PC-3 (cell line): ENCODE measurements at regions of chrX and their contacts with region 1.

Region 1: DNA sequence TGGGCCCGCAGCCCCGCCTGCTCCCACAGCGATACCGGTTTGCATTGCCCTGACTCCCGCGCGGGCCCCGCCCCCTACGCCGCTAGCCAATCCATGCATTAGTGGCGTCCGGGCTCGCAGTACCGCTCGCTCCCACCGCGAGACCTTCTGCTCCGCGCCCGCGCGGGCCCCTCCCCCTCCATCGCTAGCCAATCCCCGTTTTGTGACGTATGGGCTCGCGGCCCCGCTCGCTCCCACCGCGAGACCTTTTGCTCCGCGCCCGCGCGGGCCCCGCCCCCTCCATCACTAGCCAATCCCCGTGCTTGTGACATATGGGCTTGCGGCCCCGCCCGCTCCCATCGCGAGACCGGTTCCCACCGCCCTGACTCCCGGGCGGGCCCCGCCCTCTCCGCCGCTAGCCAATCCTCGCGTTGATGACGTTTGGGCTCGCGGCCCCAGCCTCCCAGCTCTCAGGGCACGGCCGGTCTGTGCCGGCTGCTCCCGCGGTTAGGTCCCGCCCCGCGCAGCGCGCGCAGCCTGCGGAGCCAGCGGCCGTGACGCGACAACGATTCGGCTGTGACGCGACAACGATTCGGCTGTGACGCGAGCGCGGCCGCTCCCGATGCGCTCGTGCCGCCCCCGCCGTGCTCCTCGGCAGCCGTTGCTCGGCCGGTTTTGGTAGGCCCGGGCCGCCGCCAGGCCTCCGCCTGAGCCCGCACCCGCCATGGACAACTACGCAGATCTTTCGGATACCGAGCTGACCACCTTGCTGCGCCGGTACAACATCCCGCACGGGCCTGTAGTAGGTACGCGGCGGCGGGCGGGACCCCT is at the start of gene EMD:
- DNase-seq: peak; percentile 98
- ATAC-seq: peak; percentile 78
- H3K4me3 ChIP-seq: peak within 1 kb of the TSS; percentile 95
- H3K27ac ChIP-seq: peak within 1 kb of the TSS; percentile 82
- H3K4me1 ChIP-seq: peaks cover 21% of the 10 kb centered on the region
- H3K27me3 ChIP-seq: no peaks in the 10 kb centered on the region
- CTCF ChIP-seq: no peak
- total RNA-seq, gene EMD: 46.8 and 49.0 TPM in 2 replicates

Region 2: DNA sequence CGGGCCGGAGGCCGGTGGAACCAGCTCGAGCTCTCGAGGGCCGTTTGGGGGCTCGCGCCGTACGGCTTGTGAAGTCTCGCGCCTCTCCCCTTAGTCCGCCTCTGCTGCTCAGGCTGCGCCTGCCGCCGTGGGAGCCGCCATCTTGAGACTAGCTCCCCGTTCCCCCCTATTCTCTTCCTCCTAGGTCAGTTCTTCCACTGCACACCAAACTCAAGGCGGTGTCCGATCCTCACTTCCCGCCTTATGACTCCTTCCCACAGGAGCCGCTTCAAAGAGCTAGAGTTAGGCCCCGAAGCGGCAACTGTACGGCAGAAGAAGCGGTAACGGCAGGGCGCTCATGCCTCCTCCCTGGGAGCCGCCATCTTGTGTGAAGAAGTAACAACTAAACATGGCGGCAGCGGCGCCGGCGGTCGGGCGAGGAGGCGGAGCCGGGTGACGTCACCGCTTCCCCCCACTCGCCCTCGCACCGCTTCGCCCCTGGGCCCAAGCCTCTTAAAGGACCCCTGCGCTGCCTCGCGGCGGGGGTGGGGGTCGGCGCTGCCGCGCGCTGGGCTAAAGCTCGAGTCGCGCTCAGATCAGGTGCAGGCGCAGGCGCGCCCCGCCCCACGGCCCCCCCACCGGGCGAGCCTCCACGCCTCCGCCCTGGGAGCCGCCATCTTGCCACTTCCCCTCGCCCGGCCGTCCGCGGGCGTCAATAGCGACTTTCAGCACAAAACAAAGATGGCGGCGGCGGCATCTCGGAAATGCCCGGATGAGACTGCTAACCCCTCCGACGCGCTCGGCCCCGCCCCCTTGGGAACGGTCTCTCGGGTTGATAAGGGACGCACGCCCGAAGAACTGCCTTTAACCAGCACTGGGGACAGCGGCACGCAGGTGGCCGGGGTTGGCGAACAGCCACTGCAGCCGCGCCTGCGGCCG is 407.3 kb before region 1 on chrX and contains the start of gene HCFC1:
- CTCF ChIA-PET with region 1: interaction called, 3 read pairs
- POLR2A ChIA-PET with region 1: no interaction called
- intact Hi-C with region 1: loop called (anchors 10 kb)
- DNase-seq: peak; percentile 82
- ATAC-seq: peak; percentile 38
- H3K4me3 ChIP-seq: peak within 1 kb of the TSS; percentile 99
- H3K27ac ChIP-seq: peak within 1 kb of the TSS; percentile 100
- H3K4me1 ChIP-seq: peaks cover 29% of the 10 kb centered on the region
- H3K27me3 ChIP-seq: no peaks in the 10 kb centered on the region
- CTCF ChIP-seq: no peak
- total RNA-seq, gene HCFC1: 66.9 and 94.0 TPM in 2 replicates

Region 3: GRCh38 chrX:154397819-154398724 is 19.1 kb after region 1 on chrX and contains the start of gene RPL10:
- CTCF ChIA-PET with region 1: no interaction called
- POLR2A ChIA-PET with region 1: interaction called, 13 read pairs
- intact Hi-C with region 1: no loop called
- DNase-seq: peak; percentile 98
- ATAC-seq: peak; percentile 56
- H3K4me3 ChIP-seq: peak within 1 kb of the TSS; percentile 90
- H3K27ac ChIP-seq: peak within 1 kb of the TSS; percentile 98
- H3K4me1 ChIP-seq: peaks cover 12% of the 10 kb centered on the region; the same call in 1 of the 2 replicates
- H3K27me3 ChIP-seq: no peaks in the 10 kb centered on the region
- CTCF ChIP-seq: no peak
- total RNA-seq, gene RPL10: 2,879 and 3,401 TPM in 2 replicates